Left colon (tissue), 2 donors: ENCODE measurements at regions of chr9 and their contacts with region 1.

Region 1: DNA sequence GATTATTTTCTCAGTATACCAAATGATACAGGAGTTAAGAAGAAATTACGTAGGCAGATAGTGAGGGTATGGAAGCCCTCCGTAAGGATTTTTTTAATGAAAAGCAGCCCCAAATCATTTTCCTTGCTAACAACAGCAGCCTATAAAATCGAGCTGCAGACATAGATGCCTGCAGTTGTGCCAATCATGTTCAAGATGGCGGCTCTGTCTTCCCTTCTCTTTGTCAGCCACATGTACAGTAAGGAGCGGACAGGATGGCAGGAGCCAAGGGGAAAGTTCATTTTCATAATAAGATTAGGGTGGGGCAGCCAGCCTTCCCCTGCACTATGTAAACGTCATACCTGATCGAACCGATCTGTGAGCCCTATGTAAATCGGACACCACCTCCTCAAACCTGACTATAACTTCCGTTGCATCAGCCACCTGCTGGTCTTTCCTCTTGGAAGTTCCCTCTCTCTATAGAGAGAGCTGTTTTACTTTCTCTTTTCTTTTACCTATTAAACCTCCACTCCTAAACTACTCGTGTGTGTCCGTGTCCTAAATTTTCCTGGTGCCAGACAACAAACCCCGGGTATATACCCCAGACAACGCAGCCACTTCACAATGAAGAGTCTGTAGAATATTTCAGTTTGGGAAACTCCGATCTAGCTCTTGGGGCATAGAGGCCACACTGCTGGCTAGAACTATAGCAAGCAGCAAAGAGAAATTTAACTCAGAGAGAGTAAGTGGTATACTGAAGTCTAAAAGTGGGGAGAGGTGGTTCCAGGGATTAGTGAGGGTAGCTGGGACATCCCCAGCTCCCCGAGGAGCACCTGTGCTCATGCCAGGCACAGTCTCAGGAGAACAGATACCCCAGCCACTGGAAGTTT is 20.8 kb upstream of the SLC24A2 start:
- DNase-seq: no peak
- ATAC-seq: no peak

Region 2: GRCh38 chr9:19769208-19769607 is 40.4 kb before region 1 on chr9:
- intact Hi-C with region 1: loop called in 1 of 2 experiments (anchors 5 kb)
- DNase-seq: no peak
- ATAC-seq: no peak